Esophagus muscularis mucosa (tissue), 4 donors: ENCODE measurements at regions of chrX and their contacts with region 1.

Region 1: DNA sequence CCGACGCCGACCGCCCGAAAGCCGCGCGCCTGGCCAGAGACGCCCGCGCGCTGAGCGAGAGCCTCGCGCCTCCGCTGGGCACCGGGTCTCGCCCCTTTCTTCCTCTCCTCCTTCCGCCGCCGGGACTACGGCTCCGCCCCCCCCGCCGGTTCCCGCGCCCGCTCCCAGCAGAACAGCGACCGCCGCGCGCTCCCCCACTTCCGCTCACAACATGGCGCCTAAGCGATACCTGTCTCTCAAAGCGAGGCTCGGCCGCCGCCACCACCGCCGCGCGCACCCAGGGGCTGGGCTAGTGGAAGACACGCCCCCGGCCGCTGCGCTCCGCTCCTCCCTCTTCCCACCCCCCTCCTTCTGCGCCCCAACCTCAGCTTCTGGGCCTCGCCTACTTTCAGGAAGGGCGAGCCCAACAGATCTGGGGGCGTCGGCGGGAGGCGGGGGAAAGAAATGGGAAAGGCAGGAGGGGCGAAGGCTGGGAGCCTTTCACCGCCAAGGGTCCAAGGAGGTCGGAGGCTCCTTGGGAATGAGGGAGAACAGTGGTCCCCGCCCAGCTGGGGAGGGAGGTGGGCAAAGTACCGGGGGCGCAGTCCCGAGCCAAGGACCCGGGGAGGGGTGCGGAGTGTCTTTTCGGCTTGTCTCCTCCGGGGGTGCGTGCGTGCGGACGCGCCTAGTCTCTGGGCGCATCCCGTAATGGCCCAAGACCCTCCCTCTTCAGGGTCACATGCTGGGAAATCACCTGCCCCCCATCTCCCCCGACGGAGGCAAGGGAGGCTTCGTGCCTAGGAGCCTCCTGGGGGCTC is at the start of gene RPS6KA3:
- DNase-seq: peak; percentile 95
- H3K4me3 ChIP-seq: peak within 1 kb of the TSS; percentile 66 to 72 (median 67)
- H3K27ac ChIP-seq: peak within 1 kb of the TSS; percentile 83 to 87 (median 84)
- H3K4me1 ChIP-seq: peaks cover 0 to 21% (median 12%) of the 10 kb centered on the region in 4 donors
- H3K27me3 ChIP-seq: no peaks in the 10 kb centered on the region
- CTCF ChIP-seq: no peak
- EP300 ChIP-seq: no peak
- POLR2A ChIP-seq: peak; percentile 41
- total RNA-seq, gene RPS6KA3: 36.1 to 41.6 (median 39.0) TPM

Region 2: GRCh38 chrX:20116579-20117240 is 150.3 kb before region 1 on chrX and contains the start of gene MAP7D2:
- intact Hi-C with region 1: no loop called
- DNase-seq: no peak
- H3K4me3 ChIP-seq: peak within 1 kb of the TSS; percentile 31 to 47 (median 36)
- H3K27ac ChIP-seq: no peak within 1 kb of the TSS
- H3K4me1 ChIP-seq: peaks cover 0 to 15% (median 13%) of the 10 kb centered on the region in 4 donors
- H3K27me3 ChIP-seq: peaks cover 0 to 22% (median 13%) of the 10 kb centered on the region in 4 donors
- CTCF ChIP-seq: no peak
- EP300 ChIP-seq: no peak
- POLR2A ChIP-seq: no peak
- total RNA-seq, gene MAP7D2: 0.19 to 0.83 (median 0.44) TPM

Region 3: GRCh38 chrX:20141281-20142220 is 125.5 kb before region 1 on chrX and contains the start of gene EIF1AX:
- intact Hi-C with region 1: loop called (anchors 5 kb)
- DNase-seq: peak; percentile 99
- H3K4me3 ChIP-seq: peak within 1 kb of the TSS; percentile 73 to 86 (median 76)
- H3K27ac ChIP-seq: peak within 1 kb of the TSS; percentile 90 to 93 (median 92)
- H3K4me1 ChIP-seq: peaks cover 18 to 33% (median 20%) of the 10 kb centered on the region in 4 donors
- H3K27me3 ChIP-seq: no peaks in the 10 kb centered on the region
- CTCF ChIP-seq: no peak
- EP300 ChIP-seq: no peak
- POLR2A ChIP-seq: peak; percentile 93
- total RNA-seq, gene EIF1AX: 45.2 to 55.0 (median 46.9) TPM

Region 4: GRCh38 chrX:20402956-20403355 is 135.9 kb after region 1 on chrX:
- intact Hi-C with region 1: no loop called
- DNase-seq: no peak
- H3K4me3 ChIP-seq: no peak overlapping the region
- H3K27ac ChIP-seq: no peak overlapping the region
- H3K4me1 ChIP-seq: no peaks in the 10 kb centered on the region
- H3K27me3 ChIP-seq: no peaks in the 10 kb centered on the region
- CTCF ChIP-seq: no peak
- EP300 ChIP-seq: no peak
- POLR2A ChIP-seq: no peak